ENCODE measurements at regions of chr18 and their contacts with region 1.

Region 1: DNA sequence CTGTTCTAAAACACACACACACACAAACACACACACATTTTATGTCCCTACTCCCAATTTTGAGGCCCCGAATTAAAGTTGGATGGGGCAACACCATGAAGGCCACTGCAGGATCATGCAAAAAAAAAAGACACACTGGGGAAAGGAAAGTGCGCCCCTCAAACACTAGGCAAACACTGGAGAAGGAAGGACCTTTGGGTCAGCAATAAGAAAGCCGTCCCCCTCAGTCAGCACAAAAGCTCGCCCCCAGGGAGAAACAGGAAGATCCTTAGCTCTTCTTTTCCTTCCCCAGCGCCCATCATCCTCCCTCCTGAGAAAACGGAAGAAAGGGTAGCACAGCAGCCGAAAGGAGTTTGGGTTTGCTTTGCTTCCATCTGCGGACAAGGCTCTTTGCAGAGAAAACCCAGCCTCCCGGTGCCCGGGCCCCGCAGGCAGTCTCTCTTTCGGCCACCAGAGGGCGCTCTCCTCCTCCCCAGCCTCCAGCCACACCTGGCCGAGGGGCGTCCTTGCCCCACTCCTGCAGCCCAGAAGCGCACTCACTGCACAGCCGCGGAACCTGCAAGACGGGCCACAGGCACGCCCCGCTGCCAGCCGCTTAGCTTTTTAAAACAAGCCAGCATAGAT is 248.5 kb downstream of the CDH20 start:
- H3K4me3 ChIP-seq: peak overlapping the region; percentile 21
- H3K27ac ChIP-seq: no peak overlapping the region
- H3K4me1 ChIP-seq: peaks cover 2% of the 10 kb centered on the region; the same call in 1 of the 2 replicates
- CTCF ChIP-seq: peak; percentile 83

Region 2: DNA sequence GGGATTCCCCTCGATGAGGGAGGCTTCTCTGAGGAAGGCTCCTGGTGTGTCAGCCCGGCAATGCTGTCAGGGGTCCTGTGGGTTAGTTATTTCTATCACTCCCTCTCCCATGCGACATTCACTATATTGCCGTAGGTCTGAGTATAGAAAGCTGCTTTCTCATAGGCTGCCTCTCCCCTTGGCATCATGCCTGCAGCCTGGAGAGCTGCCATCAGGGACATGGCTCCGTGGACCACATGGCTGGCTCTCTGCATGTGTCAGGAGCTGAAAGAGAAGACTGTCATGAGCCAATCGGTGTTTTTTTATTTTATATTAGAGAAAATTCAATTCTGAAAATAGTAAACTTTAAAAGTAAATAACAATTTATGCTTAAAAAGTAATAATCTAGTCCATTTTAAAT is 50.5 kb before region 1 on chr18:
- CTCF ChIA-PET with region 1: no interaction called
- POLR2A ChIA-PET with region 1: no interaction called
- H3K4me3 ChIP-seq: no peak overlapping the region
- H3K27ac ChIP-seq: no peak overlapping the region
- H3K4me1 ChIP-seq: no peaks in the 10 kb centered on the region
- CTCF ChIP-seq: no peak

Region 3: DNA sequence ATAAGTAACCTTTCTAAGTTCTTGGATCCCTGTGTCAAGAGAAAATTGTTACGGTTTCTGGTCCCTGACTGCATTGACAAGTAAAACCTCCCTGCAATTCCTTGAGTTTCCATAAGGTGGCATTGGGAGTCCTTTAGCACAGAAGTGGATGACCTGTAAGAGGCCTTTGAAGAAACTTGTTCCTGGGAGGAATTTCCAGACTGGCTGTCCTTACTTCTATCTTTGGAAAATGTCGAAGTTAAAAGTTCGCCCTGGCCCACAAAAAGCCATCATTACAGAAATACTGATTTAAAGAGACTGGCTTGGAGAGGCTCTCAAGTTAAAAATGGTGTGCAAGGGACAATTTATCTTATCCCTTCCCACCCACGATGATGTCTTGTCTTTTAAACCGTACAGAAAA is 30.1 kb before region 1 on chr18:
- CTCF ChIA-PET with region 1: interaction called, 12 read pairs
- POLR2A ChIA-PET with region 1: no interaction called
- H3K4me3 ChIP-seq: no peak overlapping the region
- H3K27ac ChIP-seq: no peak overlapping the region
- H3K4me1 ChIP-seq: no peaks in the 10 kb centered on the region
- CTCF ChIP-seq: no peak

Region 4: GRCh38 chr18:61597316-61597715 is 15.6 kb after region 1 on chr18:
- CTCF ChIA-PET with region 1: interaction called, 19 read pairs
- POLR2A ChIA-PET with region 1: no interaction called
- H3K4me3 ChIP-seq: no peak overlapping the region
- H3K27ac ChIP-seq: no peak overlapping the region
- H3K4me1 ChIP-seq: peaks cover 9% of the 10 kb centered on the region; the same call in 1 of the 2 replicates
- CTCF ChIP-seq: no peak

Region 5: DNA sequence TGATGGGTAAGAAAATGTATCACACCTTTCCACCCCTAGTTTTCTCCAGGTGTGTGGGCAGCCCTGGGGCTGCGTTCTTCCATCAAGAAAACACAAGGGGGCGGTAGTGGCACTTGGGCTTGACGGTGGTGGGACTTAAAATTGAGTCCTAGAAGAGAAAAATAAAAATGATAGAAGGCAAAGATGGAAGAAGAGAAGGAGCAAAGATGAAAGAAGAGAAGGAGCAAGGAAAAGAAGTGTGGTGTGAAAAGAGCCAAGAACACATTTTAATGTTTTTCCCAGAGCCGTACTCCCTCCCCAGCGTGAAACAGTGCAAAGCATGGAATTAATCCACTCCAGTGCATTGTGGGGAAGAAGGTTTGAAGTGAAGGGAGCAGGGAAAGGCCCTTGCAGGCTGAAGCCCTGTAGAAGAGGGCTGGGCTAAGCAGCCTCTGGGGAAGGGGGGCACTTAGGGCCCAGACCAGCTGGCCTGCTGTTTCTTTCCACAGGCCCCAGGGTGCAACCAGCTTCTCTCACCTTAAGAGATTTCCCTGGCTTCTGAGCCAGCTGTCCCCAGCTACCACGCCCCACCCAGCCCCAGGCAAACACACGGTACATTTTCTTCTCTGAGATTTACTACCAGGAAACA is 54.3 kb after region 1 on chr18:
- CTCF ChIA-PET with region 1: interaction called, 11 read pairs
- POLR2A ChIA-PET with region 1: no interaction called
- H3K4me3 ChIP-seq: no peak overlapping the region
- H3K27ac ChIP-seq: no peak overlapping the region
- H3K4me1 ChIP-seq: no peaks in the 10 kb centered on the region
- CTCF ChIP-seq: peak; percentile 42; the same call in 1 of the 2 replicates

Region 6: DNA sequence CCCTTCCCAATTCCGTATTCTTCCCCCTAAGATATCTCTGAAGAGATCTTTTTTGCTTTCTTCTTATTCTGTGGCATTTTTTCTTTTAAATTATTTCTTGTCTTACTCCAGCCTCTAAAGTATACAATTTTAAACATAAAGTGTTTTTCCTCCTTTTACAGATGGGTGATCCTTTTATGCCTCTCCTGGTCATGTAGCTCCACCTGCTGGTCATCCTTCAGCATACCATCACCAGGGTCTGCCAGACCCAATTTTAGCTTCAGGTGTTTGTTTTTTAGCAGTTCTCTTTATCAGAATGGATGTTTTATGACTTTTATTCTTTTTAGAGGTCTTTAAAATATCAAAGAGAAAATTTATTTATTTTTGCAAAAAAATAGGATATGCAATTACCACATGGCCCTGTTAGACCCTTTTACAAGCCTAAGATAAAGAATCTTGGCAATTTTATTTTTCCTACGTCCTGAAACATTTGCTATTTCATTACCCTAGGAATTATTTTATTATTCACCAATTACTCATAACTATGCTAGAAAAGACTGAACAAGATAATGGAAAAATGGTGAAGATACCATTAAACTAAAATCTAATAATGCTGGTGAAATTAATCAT is 549.7 kb after region 1 on chr18:
- CTCF ChIA-PET with region 1: interaction called, 34 read pairs
- POLR2A ChIA-PET with region 1: no interaction called
- H3K4me3 ChIP-seq: no peak overlapping the region
- H3K27ac ChIP-seq: no peak overlapping the region
- H3K4me1 ChIP-seq: 0 out of 2 replicates have a peak, but pooled peaks cover 2% of the 10 kb centered on the region
- CTCF ChIP-seq: peak; percentile 77

Measured in HEK293 (cell line).